HCT116 (cell line): ENCODE measurements at regions of chr9 and their contacts with region 1.

Region 1: GRCh38 chr9:121861501-121862180 is 210.2 kb downstream of the DAB2IP start:
- DNase-seq: peak; percentile 31
- ATAC-seq: peak; percentile 100
- H3K4me3 ChIP-seq: no peak overlapping the region
- H3K27ac ChIP-seq: no peak overlapping the region
- H3K4me1 ChIP-seq: no peaks in the 10 kb centered on the region
- H3K27me3 ChIP-seq: peaks cover 5% of the 10 kb centered on the region; the same call in 1 of the 2 replicates
- CTCF ChIP-seq: peak; percentile 79 to 91 (median 80); a peak in 5 of 6 replicates
- POLR2A ChIP-seq: no peak
- RAD21 ChIP-seq: peak; percentile 73

Region 2: GRCh38 chr9:121634329-121635261 is 227.0 kb before region 1 on chr9:
- CTCF ChIA-PET with region 1: interaction called, 3 read pairs
- POLR2A ChIA-PET with region 1: no interaction called
- RAD21 ChIA-PET with region 1: no interaction called
- intact Hi-C with region 1: loop called (anchors 1 kb)
- DNase-seq: no peak
- ATAC-seq: peak; percentile 84
- H3K4me3 ChIP-seq: no peak overlapping the region
- H3K27ac ChIP-seq: no peak overlapping the region; the same call in 1 of the 2 replicates
- H3K4me1 ChIP-seq: peaks cover 16 to 25% of the 10 kb centered on the region in 2 experiments
- H3K27me3 ChIP-seq: no peaks in the 10 kb centered on the region
- CTCF ChIP-seq: peak; percentile 52 to 59 (median 57); a peak in 5 of 6 replicates
- POLR2A ChIP-seq: no peak
- RAD21 ChIP-seq: peak; percentile 74

Region 3: GRCh38 chr9:121698627-121699570 is 162.7 kb before region 1 on chr9:
- CTCF ChIA-PET with region 1: interaction called, 4 read pairs
- POLR2A ChIA-PET with region 1: no interaction called
- RAD21 ChIA-PET with region 1: no interaction called
- intact Hi-C with region 1: loop called (anchors 5 kb)
- DNase-seq: no peak
- ATAC-seq: peak; percentile 74
- H3K4me3 ChIP-seq: peak overlapping the region; percentile 70 to 73
- H3K27ac ChIP-seq: peak overlapping the region; percentile 64; the same call in 1 of the 2 replicates
- H3K4me1 ChIP-seq: peaks cover 2 to 17% of the 10 kb centered on the region in 2 experiments; a peak in 3 of 4 replicates
- H3K27me3 ChIP-seq: no peaks in the 10 kb centered on the region
- CTCF ChIP-seq: no peak
- POLR2A ChIP-seq: no peak
- RAD21 ChIP-seq: no peak

Region 4: GRCh38 chr9:121735065-121735789 is 126.4 kb before region 1 on chr9:
- CTCF ChIA-PET with region 1: interaction called, 3 read pairs
- POLR2A ChIA-PET with region 1: no interaction called
- RAD21 ChIA-PET with region 1: interaction called in 1 of 2 experiments, 4 read pairs
- intact Hi-C with region 1: loop called (anchors 5 kb)
- DNase-seq: no peak
- ATAC-seq: peak; percentile 81
- H3K4me3 ChIP-seq: peak overlapping the region; percentile 43 to 56
- H3K27ac ChIP-seq: peak overlapping the region; percentile 41
- H3K4me1 ChIP-seq: peaks cover 40 to 43% of the 10 kb centered on the region in 2 experiments
- H3K27me3 ChIP-seq: no peaks in the 10 kb centered on the region
- CTCF ChIP-seq: peak in 2 of 3 experiments; percentile 62 to 83; a peak in 4 of 6 replicates
- POLR2A ChIP-seq: no peak
- RAD21 ChIP-seq: no peak

Region 5: DNA sequence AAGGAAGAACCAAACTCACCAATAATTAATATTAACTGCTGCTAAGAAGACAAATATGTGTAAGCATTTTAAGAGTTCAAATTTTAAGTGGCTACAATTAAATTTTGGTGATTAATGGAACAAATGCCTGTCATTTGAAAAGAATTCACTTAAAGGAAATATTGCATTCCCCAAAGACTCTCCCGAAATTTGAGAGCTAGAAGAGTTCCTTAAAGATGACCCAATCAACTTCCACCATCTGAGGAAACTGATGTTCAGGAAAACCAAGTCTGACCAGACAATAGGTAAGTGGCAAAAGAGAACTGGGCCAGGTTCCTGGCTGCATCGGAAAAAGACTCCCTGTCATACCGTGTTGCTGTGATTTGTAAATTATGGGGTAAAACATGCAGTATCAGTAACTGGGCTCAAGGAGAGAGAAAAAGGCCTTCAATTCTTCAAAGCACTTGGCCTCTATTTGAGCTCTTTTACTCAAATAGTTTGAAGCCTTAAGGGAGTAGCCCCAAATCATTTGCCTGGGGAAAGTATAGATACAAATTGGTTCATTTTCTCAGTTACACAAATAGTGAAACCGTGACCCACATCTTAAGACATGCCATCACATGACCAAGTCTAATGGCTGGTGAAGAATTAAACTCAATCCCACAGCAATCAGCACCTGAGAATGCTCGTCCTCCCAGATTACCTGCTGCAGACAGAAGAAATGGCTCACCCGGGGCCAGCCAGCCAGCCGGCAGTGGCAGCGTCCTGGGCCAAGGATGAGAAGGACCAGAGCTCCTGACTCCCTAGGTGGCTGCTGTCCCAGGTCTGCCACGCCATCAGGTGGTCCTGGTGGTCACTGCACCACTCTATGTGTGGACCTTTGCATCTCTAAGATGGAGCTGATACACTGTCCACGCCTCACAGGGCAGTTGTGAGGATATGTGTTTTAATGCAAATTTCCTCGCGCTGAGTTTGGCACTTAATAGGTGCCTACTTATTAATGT is 68.5 kb after region 1 on chr9:
- CTCF ChIA-PET with region 1: no interaction called
- POLR2A ChIA-PET with region 1: no interaction called
- RAD21 ChIA-PET with region 1: no interaction called
- intact Hi-C with region 1: no loop called
- DNase-seq: peak; percentile 10
- ATAC-seq: peak; percentile 84
- H3K4me3 ChIP-seq: no peak overlapping the region
- H3K27ac ChIP-seq: no peak overlapping the region
- H3K4me1 ChIP-seq: no peaks in the 10 kb centered on the region
- H3K27me3 ChIP-seq: 0 out of 2 replicates have a peak, but pooled peaks cover 2% of the 10 kb centered on the region
- CTCF ChIP-seq: peak; percentile 36 to 40 (median 38); a peak in 4 of 6 replicates
- POLR2A ChIP-seq: no peak
- RAD21 ChIP-seq: peak; percentile 63

Region 6: DNA sequence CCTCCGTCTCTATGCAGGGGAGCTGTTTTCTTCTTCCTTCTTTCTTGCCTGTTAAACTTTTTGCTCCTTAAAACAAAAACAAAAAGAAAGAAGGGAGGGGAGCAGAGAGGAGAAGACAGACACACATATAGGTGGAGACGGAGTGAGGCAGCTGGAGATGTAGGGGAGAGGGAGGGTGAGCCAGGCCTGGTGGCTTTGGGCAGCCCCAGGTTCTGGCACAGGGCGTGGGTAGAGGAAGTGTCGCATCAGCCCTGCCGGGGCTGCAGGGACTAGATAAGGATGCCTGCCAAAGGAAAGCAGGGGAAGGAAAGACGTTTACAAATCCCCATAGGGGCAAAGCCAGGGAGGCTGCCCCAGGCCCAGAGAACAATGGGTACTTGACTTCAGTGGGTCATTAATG is 470.4 kb after region 1 on chr9:
- CTCF ChIA-PET with region 1: no interaction called
- POLR2A ChIA-PET with region 1: no interaction called
- RAD21 ChIA-PET with region 1: no interaction called
- intact Hi-C with region 1: no loop called
- DNase-seq: no peak
- ATAC-seq: no peak
- H3K4me3 ChIP-seq: no peak overlapping the region
- H3K27ac ChIP-seq: no peak overlapping the region
- H3K4me1 ChIP-seq: peaks cover 4 to 5% of the 10 kb centered on the region in 2 experiments; a peak in 2 of 4 replicates
- H3K27me3 ChIP-seq: no peaks in the 10 kb centered on the region
- CTCF ChIP-seq: no peak
- POLR2A ChIP-seq: no peak
- RAD21 ChIP-seq: no peak